ENCODE measurements at regions of chr18 and their contacts with region 1.

Region 1: DNA sequence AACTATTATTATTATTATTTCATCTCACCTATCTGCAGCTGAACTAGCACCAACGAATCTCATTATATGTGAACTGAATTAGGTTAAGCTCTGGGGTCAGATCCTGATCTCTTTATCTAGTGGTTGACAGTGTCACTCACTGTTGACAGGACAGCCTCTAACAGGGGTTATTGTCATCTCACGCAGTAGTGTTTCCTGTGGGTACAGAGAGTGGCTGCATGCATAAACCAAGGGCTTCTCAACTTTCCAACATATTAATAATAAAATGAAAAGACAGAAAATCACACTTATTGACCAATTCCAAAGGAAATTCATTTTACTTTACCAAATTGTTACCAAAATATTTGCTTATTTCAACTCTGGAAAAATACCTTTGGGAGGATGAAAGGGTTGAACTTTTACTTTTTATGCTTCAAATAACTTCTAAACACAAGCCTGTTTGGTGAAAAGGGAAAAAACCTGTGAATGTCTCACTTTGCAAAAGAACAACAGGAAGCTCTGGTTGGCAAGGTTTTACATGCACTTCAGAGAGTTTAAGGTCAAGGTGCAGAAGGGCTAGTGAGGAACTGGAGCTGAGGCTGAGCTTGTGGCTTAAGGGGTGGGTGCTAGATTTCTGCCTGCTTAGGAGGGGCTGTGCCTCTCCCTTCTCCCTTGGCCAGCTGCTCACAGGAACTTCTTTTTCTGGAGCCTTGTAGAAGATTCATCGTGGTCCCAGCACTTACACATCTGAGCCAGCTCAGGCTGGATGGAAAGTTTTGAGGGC is 72.6 kb downstream of the CTAGE1 start:
- DNase-seq: peak in 21 of 35 experiments; percentile 11 to 72 (median 30)
- ATAC-seq: peak; percentile 62 to 77 (median 66)
- H3K4me3 ChIP-seq: no peak overlapping the region
- H3K4me3 Mint-ChIP-seq: peak overlapping the region; percentile 39 to 85 (median 79)
- H3K27ac ChIP-seq: peak overlapping the region; percentile 77
- H3K27ac Mint-ChIP-seq: peak overlapping the region; percentile 95 to 97
- H3K4me1 ChIP-seq: peaks cover 30 to 80% of the 10 kb centered on the region in 2 experiments
- H3K4me1 Mint-ChIP-seq: peaks cover 52 to 71% (median 59%) of the 10 kb centered on the region in 3 donors
- H3K27me3 ChIP-seq: peaks cover 10 to 11% of the 10 kb centered on the region in 2 experiments
- H3K27me3 Mint-ChIP-seq: peaks cover 29 to 38% of the 10 kb centered on the region in 2 donors

Region 2: GRCh38 chr18:22194151-22194598 is 150.9 kb before region 1 on chr18:
- CTCF ChIA-PET with region 1: no interaction called
- POLR2A ChIA-PET with region 1: no interaction called
- DNase-seq: no peak
- ATAC-seq: no peak
- H3K4me3 ChIP-seq: no peak overlapping the region
- H3K4me3 Mint-ChIP-seq: no peak overlapping the region
- H3K27ac ChIP-seq: no peak overlapping the region
- H3K27ac Mint-ChIP-seq: no peak overlapping the region
- H3K4me1 ChIP-seq: no peaks in the 10 kb centered on the region
- H3K4me1 Mint-ChIP-seq: no peaks in the 10 kb centered on the region
- H3K27me3 ChIP-seq: peaks cover 3 to 20% of the 10 kb centered on the region in 2 experiments
- H3K27me3 Mint-ChIP-seq: peaks cover 20 to 31% of the 10 kb centered on the region in 2 donors

Region 3: GRCh38 chr18:22282311-22283112 is 62.6 kb before region 1 on chr18:
- CTCF ChIA-PET with region 1: interaction called in 1 of 2 experiments, 7 read pairs
- POLR2A ChIA-PET with region 1: interaction called in 1 of 2 experiments, 12 read pairs
- DNase-seq: peak in 31 of 35 experiments; percentile 8 to 75 (median 34)
- ATAC-seq: peak; percentile 35 to 92 (median 82)
- H3K4me3 ChIP-seq: no peak overlapping the region
- H3K4me3 Mint-ChIP-seq: no peak overlapping the region
- H3K27ac ChIP-seq: peak overlapping the region; percentile 92
- H3K27ac Mint-ChIP-seq: peak overlapping the region; percentile 65 to 70
- H3K4me1 ChIP-seq: peaks cover 0 to 7% of the 10 kb centered on the region in 2 experiments
- H3K4me1 Mint-ChIP-seq: peaks cover 0 to 17% (median 8%) of the 10 kb centered on the region in 3 donors
- H3K27me3 ChIP-seq: peaks cover 0 to 5% of the 10 kb centered on the region in 2 experiments
- H3K27me3 Mint-ChIP-seq: no peaks in the 10 kb centered on the region

Region 4: GRCh38 chr18:22314420-22314819 is 30.7 kb before region 1 on chr18:
- CTCF ChIA-PET with region 1: no interaction called
- POLR2A ChIA-PET with region 1: no interaction called
- DNase-seq: no peak
- ATAC-seq: no peak
- H3K4me3 ChIP-seq: no peak overlapping the region
- H3K4me3 Mint-ChIP-seq: no peak overlapping the region
- H3K27ac ChIP-seq: no peak overlapping the region
- H3K27ac Mint-ChIP-seq: no peak overlapping the region
- H3K4me1 ChIP-seq: no peaks in the 10 kb centered on the region
- H3K4me1 Mint-ChIP-seq: no peaks in the 10 kb centered on the region
- H3K27me3 ChIP-seq: peaks cover 0 to 2% of the 10 kb centered on the region in 2 experiments
- H3K27me3 Mint-ChIP-seq: no peaks in the 10 kb centered on the region

Measured in T-cell (primary cell).